HCT116 (cell line): ENCODE measurements at regions of chr13 and their contacts with region 1.

Region 1: GRCh38 chr13:44484562-44485138 is 91.5 kb downstream of the TSC22D1 start:
- DNase-seq: no peak
- ATAC-seq: no peak
- H3K4me3 ChIP-seq: no peak overlapping the region
- H3K27ac ChIP-seq: no peak overlapping the region
- H3K4me1 ChIP-seq: no peaks in the 10 kb centered on the region
- H3K27me3 ChIP-seq: no peaks in the 10 kb centered on the region
- CTCF ChIP-seq: no peak
- POLR2A ChIP-seq: no peak
- RAD21 ChIP-seq: no peak

Region 2: DNA sequence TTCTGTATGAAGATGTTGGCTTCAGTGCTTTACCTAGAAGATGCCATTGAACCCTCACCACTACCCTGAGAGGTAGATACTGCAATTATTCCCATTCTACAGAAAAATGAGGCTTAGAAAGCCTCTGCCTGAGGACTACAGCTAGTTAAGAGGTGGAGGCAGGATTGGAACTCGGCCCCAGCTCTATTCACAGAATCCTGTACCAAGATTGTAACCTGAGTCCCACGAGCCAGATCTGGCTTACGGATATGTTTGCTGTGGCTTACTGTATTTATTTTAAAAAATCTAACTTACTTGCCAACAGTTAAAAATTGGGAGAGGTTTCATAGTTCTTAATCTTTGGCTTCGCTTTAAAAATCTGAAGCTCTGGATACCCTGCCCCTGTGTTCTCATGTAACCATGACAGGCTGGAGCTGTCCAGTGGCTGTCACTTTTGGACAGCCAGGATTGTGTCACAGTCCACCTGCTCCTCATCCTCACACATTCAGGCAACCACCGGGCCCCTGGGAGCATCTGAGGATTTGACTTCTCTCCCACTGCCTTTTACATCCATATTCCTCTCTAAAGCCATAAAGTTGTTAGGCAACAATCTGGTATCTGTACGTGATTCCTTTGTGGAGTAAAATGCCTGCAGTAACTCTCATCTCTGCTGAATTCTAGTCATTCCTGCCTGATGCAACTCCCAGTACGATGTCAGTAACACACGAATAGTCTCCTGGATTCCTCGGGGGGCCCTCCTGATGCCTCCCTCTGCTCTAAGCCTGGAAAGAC is 271.8 kb before region 1 on chr13:
- CTCF ChIA-PET with region 1: no interaction called
- POLR2A ChIA-PET with region 1: no interaction called
- RAD21 ChIA-PET with region 1: no interaction called
- intact Hi-C with region 1: no loop called
- DNase-seq: no peak
- ATAC-seq: no peak
- H3K4me3 ChIP-seq: no peak overlapping the region
- H3K27ac ChIP-seq: no peak overlapping the region
- H3K4me1 ChIP-seq: no peaks in the 10 kb centered on the region
- H3K27me3 ChIP-seq: no peaks in the 10 kb centered on the region
- CTCF ChIP-seq: no peak
- POLR2A ChIP-seq: no peak
- RAD21 ChIP-seq: no peak

Region 3: GRCh38 chr13:44364348-44365049 is 120.2 kb before region 1 on chr13:
- CTCF ChIA-PET with region 1: no interaction called
- POLR2A ChIA-PET with region 1: no interaction called
- RAD21 ChIA-PET with region 1: no interaction called
- intact Hi-C with region 1: no loop called
- DNase-seq: peak; percentile 71
- ATAC-seq: peak; percentile 79
- H3K4me3 ChIP-seq: peak overlapping the region in 1 of 2 experiments; percentile 11; a peak in 2 of 4 replicates
- H3K27ac ChIP-seq: peak overlapping the region; percentile 28; the same call in 1 of the 2 replicates
- H3K4me1 ChIP-seq: peaks cover 19 to 75% of the 10 kb centered on the region in 2 experiments; a peak in 3 of 4 replicates
- H3K27me3 ChIP-seq: no peaks in the 10 kb centered on the region
- CTCF ChIP-seq: no peak
- POLR2A ChIP-seq: no peak
- RAD21 ChIP-seq: no peak

Region 4: DNA sequence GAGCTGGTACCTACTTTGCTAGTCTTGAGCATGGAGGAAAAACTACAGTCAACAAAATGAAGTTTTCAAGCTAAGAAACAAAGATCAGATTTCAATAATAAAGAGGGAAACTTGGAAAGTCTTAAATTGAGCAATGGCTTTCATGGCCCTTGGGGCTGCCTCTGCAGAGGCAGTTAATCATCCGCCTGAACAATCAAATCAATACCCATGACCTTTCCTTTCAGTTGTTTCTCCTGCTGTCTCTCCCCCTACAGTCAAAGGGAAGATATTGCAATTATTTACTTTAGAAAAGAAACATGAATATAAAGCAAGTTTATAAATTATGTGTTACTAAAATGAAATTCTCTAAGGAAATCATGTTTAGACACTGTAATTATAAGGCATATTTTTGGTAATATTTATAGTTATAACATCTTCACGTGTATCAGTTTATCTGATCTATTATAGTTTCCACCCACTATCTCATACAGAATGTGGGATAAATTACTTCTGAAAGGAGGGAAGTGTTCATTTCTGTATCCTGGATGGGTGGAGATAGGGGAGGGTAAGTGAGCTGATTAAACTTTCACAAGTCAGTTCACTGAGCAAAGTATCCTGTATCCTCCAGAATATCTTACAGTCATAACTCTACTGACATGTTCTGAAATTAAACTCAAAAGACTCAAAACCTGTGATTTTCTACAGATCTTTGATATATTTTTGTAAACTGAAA is 163.9 kb after region 1 on chr13:
- CTCF ChIA-PET with region 1: no interaction called
- POLR2A ChIA-PET with region 1: no interaction called
- RAD21 ChIA-PET with region 1: no interaction called
- intact Hi-C with region 1: loop called (anchors 10 kb)
- DNase-seq: peak; percentile 21
- ATAC-seq: peak; percentile 76
- H3K4me3 ChIP-seq: no peak overlapping the region
- H3K27ac ChIP-seq: no peak overlapping the region
- H3K4me1 ChIP-seq: peaks cover 0 to 9% of the 10 kb centered on the region in 2 experiments; a peak in 1 of 4 replicates
- H3K27me3 ChIP-seq: no peaks in the 10 kb centered on the region
- CTCF ChIP-seq: peak; percentile 6 to 54 (median 46); a peak in 4 of 6 replicates
- POLR2A ChIP-seq: no peak
- RAD21 ChIP-seq: peak; percentile 45

Region 5: GRCh38 chr13:44815623-44816022 is 331.0 kb after region 1 on chr13:
- CTCF ChIA-PET with region 1: interaction called, 39 read pairs
- POLR2A ChIA-PET with region 1: no interaction called
- RAD21 ChIA-PET with region 1: interaction called, 6 to 9 read pairs
- intact Hi-C with region 1: loop called (anchors 1 kb)
- DNase-seq: peak; percentile 67
- ATAC-seq: peak; percentile 70
- H3K4me3 ChIP-seq: 0 out of 4 replicates have a peak overlapping the region, but pooled peaks of 1 of the 2 experiments have one; percentile 4
- H3K27ac ChIP-seq: no peak overlapping the region
- H3K4me1 ChIP-seq: peaks cover 37 to 52% of the 10 kb centered on the region in 2 experiments
- H3K27me3 ChIP-seq: no peaks in the 10 kb centered on the region
- CTCF ChIP-seq: no peak
- POLR2A ChIP-seq: no peak
- RAD21 ChIP-seq: peak; percentile 26; the same call in 1 of the 2 replicates

Region 6: DNA sequence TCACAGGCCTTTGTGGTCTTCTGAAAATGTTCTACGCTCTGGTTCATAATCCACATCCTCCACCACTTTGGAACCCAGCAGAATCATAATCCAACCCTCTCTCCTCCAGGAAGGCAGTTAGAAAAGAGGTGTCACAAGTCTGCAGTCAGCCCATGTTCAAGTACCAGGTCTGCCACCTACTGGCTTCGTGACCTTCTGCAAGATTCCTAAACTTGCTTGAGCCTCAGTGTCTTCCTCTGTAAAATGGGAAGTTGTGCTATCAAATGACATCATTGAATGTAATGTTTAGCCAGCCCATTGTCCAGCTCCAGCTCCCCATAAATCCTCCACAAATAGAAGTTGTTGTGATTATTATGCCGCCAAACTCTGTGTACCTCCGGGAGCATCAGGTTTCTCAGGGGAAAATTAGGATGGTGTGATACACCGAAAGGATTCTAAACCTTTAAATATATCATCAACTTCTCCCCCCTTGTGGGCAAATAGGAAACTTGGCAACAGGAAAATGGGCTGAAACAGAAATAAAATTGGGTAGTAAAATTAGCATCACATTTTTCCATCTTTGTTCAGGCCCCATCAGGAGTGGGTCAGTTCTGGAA is 394.9 kb after region 1 on chr13:
- CTCF ChIA-PET with region 1: no interaction called
- POLR2A ChIA-PET with region 1: no interaction called
- RAD21 ChIA-PET with region 1: no interaction called
- intact Hi-C with region 1: loop called (anchors 2 kb)
- DNase-seq: peak; percentile 40
- ATAC-seq: peak; percentile 78
- H3K4me3 ChIP-seq: no peak overlapping the region
- H3K27ac ChIP-seq: no peak overlapping the region
- H3K4me1 ChIP-seq: no peaks in the 10 kb centered on the region
- H3K27me3 ChIP-seq: no peaks in the 10 kb centered on the region
- CTCF ChIP-seq: peak; percentile 37 to 55 (median 48); a peak in 5 of 6 replicates
- POLR2A ChIP-seq: no peak
- RAD21 ChIP-seq: peak; percentile 73

Region 7: DNA sequence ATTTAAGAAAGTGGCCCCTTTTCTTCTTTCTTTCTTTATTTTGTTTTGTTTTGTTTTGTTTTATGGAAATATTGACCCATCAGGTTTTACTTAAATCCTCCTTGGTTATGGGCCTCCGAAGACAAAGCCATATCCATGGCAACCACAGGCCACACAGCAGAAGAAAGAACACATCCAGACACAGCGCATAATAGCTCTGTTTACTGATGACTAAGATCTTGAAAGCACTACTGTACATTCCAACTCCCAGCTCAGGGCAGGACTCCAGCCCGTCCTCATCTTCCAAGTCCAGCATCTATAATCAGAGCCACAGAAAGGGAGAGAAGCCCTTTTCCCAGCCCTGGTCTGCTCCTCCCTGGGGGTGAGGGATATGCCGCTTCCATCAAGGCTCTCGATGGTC is 420.3 kb after region 1 on chr13:
- CTCF ChIA-PET with region 1: no interaction called
- POLR2A ChIA-PET with region 1: no interaction called
- RAD21 ChIA-PET with region 1: no interaction called
- intact Hi-C with region 1: no loop called
- DNase-seq: no peak
- ATAC-seq: no peak
- H3K4me3 ChIP-seq: no peak overlapping the region
- H3K27ac ChIP-seq: no peak overlapping the region
- H3K4me1 ChIP-seq: no peaks in the 10 kb centered on the region
- H3K27me3 ChIP-seq: no peaks in the 10 kb centered on the region; the same call in 1 of the 2 replicates
- CTCF ChIP-seq: no peak
- POLR2A ChIP-seq: no peak
- RAD21 ChIP-seq: no peak

Region 8: DNA sequence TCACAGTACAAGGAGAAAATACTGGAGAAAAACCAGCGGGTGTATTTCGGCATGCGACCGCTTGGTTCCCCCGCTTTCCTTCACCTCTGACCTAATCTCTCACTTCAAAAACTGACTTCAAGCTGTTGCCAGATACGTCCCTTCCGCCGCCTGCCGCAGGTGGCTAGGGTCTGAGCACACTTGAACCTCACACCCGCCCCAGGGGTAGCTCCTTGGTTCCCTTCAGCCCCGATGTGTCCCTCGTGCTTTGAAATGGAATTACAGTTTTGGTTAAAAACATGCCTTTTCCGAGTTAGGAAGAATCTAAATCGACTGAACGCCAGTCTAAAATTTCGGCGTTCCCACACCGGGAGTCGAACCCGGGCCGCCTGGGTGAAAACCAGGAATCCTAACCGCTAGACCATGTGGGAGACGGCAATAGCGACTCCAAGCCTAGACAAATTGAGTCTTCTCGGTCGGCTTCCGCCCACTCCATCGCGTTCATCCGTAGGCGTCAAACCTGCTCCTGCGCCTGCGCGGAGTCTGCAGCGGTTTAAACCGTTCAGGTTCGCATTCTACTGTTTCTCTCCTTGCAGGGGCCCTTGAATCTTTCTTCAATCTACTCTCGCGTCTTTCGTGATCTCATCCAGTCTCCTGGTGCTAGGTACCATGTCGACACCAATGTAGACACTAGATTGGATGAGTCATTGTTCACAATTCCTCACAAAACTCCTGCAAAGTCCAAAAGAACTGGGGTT is 433.1 kb after region 1 on chr13:
- CTCF ChIA-PET with region 1: interaction called, 4 read pairs
- POLR2A ChIA-PET with region 1: no interaction called
- RAD21 ChIA-PET with region 1: no interaction called
- intact Hi-C with region 1: loop called (anchors 5 kb)
- DNase-seq: peak; percentile 93
- ATAC-seq: peak; percentile 78
- H3K4me3 ChIP-seq: peak overlapping the region; percentile 40 to 46
- H3K27ac ChIP-seq: peak overlapping the region; percentile 84
- H3K4me1 ChIP-seq: peaks cover 19 to 40% of the 10 kb centered on the region in 2 experiments
- H3K27me3 ChIP-seq: no peaks in the 10 kb centered on the region
- CTCF ChIP-seq: peak in 2 of 3 experiments; percentile 26 to 46; a peak in 2 of 6 replicates
- POLR2A ChIP-seq: peak; percentile 24
- RAD21 ChIP-seq: no peak

Region 9: DNA sequence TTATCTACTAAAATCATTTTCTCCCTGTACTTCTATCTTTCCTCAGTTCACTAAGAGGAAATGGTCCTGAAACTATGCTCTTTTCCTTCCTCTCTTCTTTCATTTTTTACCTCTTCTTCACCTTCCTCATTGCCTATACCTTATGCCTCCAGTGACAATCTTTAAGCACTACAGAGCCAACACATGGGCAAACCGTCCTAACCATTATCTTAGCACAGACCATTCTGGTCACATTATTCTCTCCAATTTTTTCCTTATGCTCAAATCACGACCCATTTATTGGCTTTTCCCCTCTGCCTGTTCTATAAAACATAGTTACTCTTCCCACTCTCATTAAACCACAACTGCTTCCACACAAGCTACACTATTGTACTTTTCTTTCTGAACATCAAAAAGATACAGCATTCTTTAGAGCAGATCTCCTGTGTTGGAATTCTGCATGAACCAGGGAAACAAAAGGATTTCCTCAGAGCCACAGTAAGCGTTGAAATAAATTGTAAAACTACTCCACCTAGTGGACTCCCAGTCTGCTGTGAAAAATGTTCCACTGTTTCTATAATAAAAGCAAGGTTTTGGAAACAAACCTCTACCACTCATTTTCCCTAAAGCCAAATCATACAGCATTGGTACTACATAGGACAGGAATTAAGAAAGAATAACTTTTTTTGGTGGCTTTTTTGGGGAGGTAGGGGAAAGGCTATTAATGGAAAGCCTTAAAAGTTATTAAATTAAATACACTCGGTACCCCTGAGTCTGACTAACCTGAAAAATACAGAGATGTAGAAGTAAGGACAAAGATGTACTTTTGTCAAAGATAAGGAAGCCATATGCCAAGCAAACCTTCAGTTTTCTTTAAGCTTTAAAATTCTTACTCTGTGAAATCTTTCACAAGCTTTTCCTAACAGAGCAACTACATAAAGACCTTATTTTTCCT is 485.2 kb after region 1 on chr13:
- CTCF ChIA-PET with region 1: interaction called, 12 read pairs
- POLR2A ChIA-PET with region 1: no interaction called
- RAD21 ChIA-PET with region 1: no interaction called
- intact Hi-C with region 1: loop called (anchors 1 kb)
- DNase-seq: peak; percentile 26
- ATAC-seq: peak; percentile 66
- H3K4me3 ChIP-seq: no peak overlapping the region
- H3K27ac ChIP-seq: no peak overlapping the region
- H3K4me1 ChIP-seq: no peaks in the 10 kb centered on the region
- H3K27me3 ChIP-seq: no peaks in the 10 kb centered on the region
- CTCF ChIP-seq: peak; percentile 63 to 85 (median 68)
- POLR2A ChIP-seq: no peak
- RAD21 ChIP-seq: peak; percentile 86

Region 10: DNA sequence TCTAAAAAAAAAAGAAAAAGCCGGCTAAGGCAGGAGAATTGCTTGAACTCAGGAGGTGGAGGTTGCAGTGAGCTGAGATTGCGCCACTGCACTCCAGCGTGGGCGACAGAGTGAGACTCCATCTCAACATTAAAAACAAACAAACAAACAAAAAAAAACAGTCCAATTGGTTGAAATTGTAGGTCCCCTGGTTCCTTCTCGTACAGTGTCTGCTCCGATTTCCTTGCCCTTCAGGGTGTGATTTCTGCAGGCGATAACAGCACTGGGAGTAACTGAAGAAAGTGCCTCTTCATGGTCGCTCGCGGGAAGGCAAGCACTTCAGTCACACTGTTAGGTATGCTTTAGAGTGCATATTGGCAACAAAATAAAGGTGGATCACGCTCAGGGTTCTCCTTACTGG is 816.6 kb after region 1 on chr13:
- CTCF ChIA-PET with region 1: no interaction called
- POLR2A ChIA-PET with region 1: no interaction called
- RAD21 ChIA-PET with region 1: no interaction called
- intact Hi-C with region 1: loop called (anchors 10 kb)
- DNase-seq: no peak
- ATAC-seq: no peak
- H3K4me3 ChIP-seq: no peak overlapping the region
- H3K27ac ChIP-seq: no peak overlapping the region
- H3K4me1 ChIP-seq: peaks cover 0 to 7% of the 10 kb centered on the region in 2 experiments; a peak in 1 of 4 replicates
- H3K27me3 ChIP-seq: no peaks in the 10 kb centered on the region
- CTCF ChIP-seq: no peak
- POLR2A ChIP-seq: no peak
- RAD21 ChIP-seq: no peak